Activated CD8-positive, alpha-beta T cell treated with anti-CD3 and anti-CD28 coated beads for 36 hours (primary cell): ENCODE measurements at regions of chr2 and their contacts with region 1.

Region 1: GRCh38 chr2:177405029-177405692 is 12.6 kb downstream of the AGPS start:
- DNase-seq: no peak
- ATAC-seq: no peak
- H3K4me3 Mint-ChIP-seq: no peak overlapping the region
- H3K27ac Mint-ChIP-seq: no peak overlapping the region
- H3K4me1 Mint-ChIP-seq: peaks cover 59% of the 10 kb centered on the region
- H3K27me3 Mint-ChIP-seq: no peaks in the 10 kb centered on the region
- CTCF ChIP-seq: no peak

Region 2: DNA sequence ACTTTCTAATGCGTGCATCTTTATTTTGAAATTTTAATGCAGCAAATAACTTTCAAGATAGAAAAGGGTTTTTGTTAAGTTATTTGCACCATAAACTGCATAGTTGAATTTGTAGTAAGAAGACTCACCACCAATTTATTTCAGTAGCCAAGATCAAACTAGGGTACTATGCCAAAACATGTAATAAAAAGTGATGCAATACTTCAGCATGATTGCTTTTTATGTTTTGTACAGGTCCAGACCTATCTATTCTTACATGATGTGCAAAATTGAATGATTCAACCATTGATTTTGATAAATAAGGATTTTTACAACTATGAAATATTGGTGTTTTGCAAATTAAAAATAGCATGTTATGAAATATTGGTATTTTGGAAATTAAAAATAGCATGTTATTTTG is 14.1 kb after region 1 on chr2:
- CTCF ChIA-PET with region 1: interaction called, 15 read pairs
- POLR2A ChIA-PET with region 1: no interaction called
- intact Hi-C with region 1: no loop called
- DNase-seq: no peak
- ATAC-seq: no peak
- H3K4me3 Mint-ChIP-seq: no peak overlapping the region
- H3K27ac Mint-ChIP-seq: peak overlapping the region; percentile 68
- H3K4me1 Mint-ChIP-seq: peaks cover 35% of the 10 kb centered on the region
- H3K27me3 Mint-ChIP-seq: no peaks in the 10 kb centered on the region
- CTCF ChIP-seq: no peak